A549 (cell line): ENCODE measurements at regions of chr9 and their contacts with region 1.

Region 1: DNA sequence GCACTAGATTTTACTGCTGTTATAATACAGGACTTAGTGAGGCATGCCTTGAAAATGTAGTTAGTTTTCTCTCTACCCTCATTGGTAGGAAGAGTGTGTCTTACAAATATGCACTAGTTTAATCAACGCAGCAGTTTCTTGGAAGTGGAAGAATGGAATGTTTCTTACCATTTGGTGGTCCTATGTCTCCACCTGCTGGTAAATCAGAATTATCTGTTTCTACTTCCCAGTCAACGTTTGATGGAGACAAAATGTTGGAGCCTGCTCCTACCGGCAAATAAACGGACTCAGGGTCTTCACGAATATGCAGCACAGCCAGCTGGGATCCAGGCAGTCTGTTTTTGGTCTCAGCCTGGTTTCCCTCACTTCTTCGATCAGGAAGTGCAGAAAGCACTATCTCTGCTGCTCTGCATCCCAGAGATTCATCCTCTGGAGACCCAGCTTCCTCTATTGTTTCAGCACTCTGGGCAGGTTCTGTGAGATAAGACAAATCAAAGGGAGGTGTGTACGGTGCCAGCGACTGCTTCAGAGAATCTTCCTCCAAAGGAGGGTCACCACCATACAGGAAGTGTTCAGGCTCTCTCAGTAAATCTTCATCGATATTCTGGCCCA is 59.5 kb upstream of the PCA3 start:
- DNase-seq: peak; percentile 44 to 88
- ATAC-seq: peak; percentile 67 to 88; a peak in 5 of 6 replicates
- H3K4me3 ChIP-seq: no peak overlapping the region
- H3K27ac ChIP-seq: no peak overlapping the region
- H3K4me1 ChIP-seq: no peaks in the 10 kb centered on the region
- CTCF ChIP-seq: peak; percentile 86
- EP300 ChIP-seq: no peak
- POLR2A ChIP-seq: no peak
- RAD21 ChIP-seq: peak; percentile 89 to 92

Region 2: GRCh38 chr9:76403352-76403751 is 301.3 kb before region 1 on chr9:
- CTCF ChIA-PET with region 1: interaction called, 11 read pairs
- POLR2A ChIA-PET with region 1: no interaction called
- DNase-seq: peak; percentile 48 to 66
- ATAC-seq: peak; percentile 77 to 86
- H3K4me3 ChIP-seq: no peak overlapping the region
- H3K27ac ChIP-seq: peak overlapping the region; percentile 42 to 68; a peak in 5 of 6 replicates
- H3K4me1 ChIP-seq: peaks cover 19% of the 10 kb centered on the region
- CTCF ChIP-seq: peak; percentile 66
- EP300 ChIP-seq: no peak
- POLR2A ChIP-seq: no peak
- RAD21 ChIP-seq: peak; percentile 39 to 52

Region 3: DNA sequence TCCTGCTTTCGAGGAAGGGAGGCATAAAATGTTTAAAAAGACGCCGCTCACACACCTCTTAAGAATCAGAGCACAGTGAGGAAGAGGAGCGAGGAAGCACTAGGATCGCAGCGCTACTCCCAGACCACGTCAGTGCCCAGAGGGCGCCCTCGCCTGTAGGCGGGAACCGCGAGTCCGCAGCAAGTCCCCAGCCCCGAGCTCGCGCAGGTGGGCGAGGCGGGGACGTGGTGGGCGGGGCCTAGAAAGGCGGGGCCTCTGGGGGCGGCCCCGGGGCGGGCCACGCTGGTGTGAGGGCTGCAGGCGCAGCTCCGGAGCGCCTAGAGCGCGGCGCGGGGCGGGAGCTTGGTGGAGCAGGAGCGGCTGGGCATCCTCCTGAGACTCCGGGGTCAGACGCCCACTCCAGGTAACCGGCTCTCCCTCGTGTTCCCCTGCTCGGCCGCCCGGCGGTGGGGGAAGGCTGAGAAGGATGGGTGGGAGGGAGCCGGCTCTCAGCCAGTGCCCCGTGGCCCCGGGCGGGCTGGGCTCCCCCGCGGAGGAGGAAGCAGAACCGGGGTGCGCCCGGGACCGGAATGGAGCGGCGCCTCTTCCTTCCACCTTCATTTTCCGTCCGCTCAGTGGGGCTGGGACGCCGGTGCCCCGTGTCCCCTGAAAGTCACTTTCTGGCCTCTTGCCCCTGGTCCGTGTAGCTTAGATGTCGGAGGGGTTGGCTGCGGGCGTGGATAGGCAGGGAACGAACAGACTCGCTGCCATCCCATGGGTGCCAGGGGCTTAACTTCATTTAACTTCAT is 245.6 kb before region 1 on chr9 and contains the start of gene GCNT1:
- CTCF ChIA-PET with region 1: interaction called, 11 read pairs
- POLR2A ChIA-PET with region 1: no interaction called
- DNase-seq: peak; percentile 87 to 88
- ATAC-seq: peak; percentile 91 to 98
- H3K4me3 ChIP-seq: peak within 1 kb of the TSS; percentile 70
- H3K27ac ChIP-seq: peak within 1 kb of the TSS; percentile 48 to 80; a peak in 5 of 6 replicates
- H3K4me1 ChIP-seq: peaks cover 22% of the 10 kb centered on the region
- CTCF ChIP-seq: peak; percentile 53
- EP300 ChIP-seq: no peak
- POLR2A ChIP-seq: peak; percentile 50
- RAD21 ChIP-seq: peak; percentile 35 to 40; a peak in 4 of 5 replicates
- polyA plus RNA-seq, gene GCNT1: 2.2 and 3.3 TPM in 2 replicates

Region 4: GRCh38 chr9:76667521-76667957 is 37.2 kb before region 1 on chr9:
- CTCF ChIA-PET with region 1: interaction called, 78 read pairs
- POLR2A ChIA-PET with region 1: no interaction called
- DNase-seq: no peak
- ATAC-seq: no peak
- H3K4me3 ChIP-seq: no peak overlapping the region
- H3K27ac ChIP-seq: no peak overlapping the region
- H3K4me1 ChIP-seq: no peaks in the 10 kb centered on the region
- CTCF ChIP-seq: no peak
- EP300 ChIP-seq: no peak
- POLR2A ChIP-seq: no peak
- RAD21 ChIP-seq: no peak

Region 5: GRCh38 chr9:76717613-76718012 is 12.9 kb after region 1 on chr9:
- CTCF ChIA-PET with region 1: interaction called, 24 read pairs
- POLR2A ChIA-PET with region 1: no interaction called
- DNase-seq: no peak
- ATAC-seq: no peak
- H3K4me3 ChIP-seq: no peak overlapping the region
- H3K27ac ChIP-seq: no peak overlapping the region
- H3K4me1 ChIP-seq: no peaks in the 10 kb centered on the region
- CTCF ChIP-seq: no peak
- EP300 ChIP-seq: no peak
- POLR2A ChIP-seq: no peak
- RAD21 ChIP-seq: no peak

Region 6: DNA sequence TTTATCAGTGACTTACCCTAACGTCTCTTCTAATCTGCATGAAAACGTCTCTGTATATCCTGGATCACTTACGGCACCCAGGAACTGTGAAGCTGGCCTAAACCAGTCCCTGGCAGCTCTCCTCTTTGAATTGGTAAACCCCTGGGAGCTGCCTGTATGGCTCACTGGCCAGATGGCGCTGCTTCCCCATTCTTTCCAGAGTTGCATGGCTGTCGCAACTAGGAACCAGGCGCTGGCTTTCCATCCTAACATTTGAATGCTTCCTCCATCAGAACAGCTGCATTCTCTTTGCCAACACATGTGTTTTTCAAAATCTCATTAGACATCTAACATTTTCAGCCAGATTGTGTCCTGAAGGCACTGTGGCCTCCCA is 51.6 kb after region 1 on chr9:
- CTCF ChIA-PET with region 1: no interaction called
- POLR2A ChIA-PET with region 1: no interaction called
- DNase-seq: peak; percentile 11 to 42
- ATAC-seq: peak; percentile 80 to 93; a peak in 5 of 6 replicates
- H3K4me3 ChIP-seq: no peak overlapping the region
- H3K27ac ChIP-seq: no peak overlapping the region
- H3K4me1 ChIP-seq: no peaks in the 10 kb centered on the region
- CTCF ChIP-seq: peak; percentile 37
- EP300 ChIP-seq: no peak
- POLR2A ChIP-seq: no peak
- RAD21 ChIP-seq: peak; percentile 47 to 61

Region 7: DNA sequence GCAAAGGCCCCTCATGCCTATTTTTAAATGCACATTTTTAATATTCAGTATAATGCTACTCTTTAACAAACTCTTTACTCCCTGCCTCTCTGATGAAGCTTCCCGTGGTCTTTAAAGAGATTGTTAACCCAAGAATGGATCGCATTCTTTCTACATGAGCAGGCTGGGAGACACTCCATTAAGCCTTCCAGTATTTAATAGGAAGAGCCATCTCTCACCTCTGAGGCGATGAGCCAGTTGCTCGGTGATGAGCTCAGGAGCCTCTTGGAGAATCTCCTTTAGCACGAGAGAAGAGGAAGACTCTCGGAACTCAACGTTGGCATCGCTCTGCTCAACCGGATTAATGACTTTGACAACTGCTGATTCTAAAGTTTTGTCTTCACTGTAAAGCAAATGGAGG is 141.6 kb after region 1 on chr9:
- CTCF ChIA-PET with region 1: no interaction called
- POLR2A ChIA-PET with region 1: no interaction called
- DNase-seq: no peak
- ATAC-seq: no peak
- H3K4me3 ChIP-seq: no peak overlapping the region
- H3K27ac ChIP-seq: no peak overlapping the region
- H3K4me1 ChIP-seq: no peaks in the 10 kb centered on the region
- CTCF ChIP-seq: no peak
- EP300 ChIP-seq: no peak
- POLR2A ChIP-seq: no peak
- RAD21 ChIP-seq: no peak